ENCODE measurements at regions of chr2 and their contacts with region 1.

Region 1: DNA sequence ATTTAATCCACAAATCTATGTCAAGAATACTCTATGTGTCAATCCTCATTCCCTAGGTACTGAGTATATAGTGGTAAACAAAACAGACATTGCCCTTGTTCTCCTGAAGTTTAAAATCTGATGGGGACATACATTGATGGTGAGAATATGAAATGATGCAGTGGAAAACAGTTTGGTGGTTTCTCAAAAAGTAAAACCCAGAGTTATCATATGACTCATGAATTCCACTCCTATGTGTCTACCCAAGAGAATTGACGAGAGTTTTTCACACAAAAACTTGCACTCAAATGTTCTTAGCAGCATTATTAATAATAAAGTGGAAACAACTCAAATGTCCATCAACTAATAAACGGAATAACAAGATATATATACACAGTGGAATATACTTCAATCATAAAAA is 586.7 kb downstream of the CCDC85A start:
- DNase-seq: no peak
- H3K4me3 ChIP-seq: no peak overlapping the region
- CTCF ChIP-seq: no peak

Region 2: DNA sequence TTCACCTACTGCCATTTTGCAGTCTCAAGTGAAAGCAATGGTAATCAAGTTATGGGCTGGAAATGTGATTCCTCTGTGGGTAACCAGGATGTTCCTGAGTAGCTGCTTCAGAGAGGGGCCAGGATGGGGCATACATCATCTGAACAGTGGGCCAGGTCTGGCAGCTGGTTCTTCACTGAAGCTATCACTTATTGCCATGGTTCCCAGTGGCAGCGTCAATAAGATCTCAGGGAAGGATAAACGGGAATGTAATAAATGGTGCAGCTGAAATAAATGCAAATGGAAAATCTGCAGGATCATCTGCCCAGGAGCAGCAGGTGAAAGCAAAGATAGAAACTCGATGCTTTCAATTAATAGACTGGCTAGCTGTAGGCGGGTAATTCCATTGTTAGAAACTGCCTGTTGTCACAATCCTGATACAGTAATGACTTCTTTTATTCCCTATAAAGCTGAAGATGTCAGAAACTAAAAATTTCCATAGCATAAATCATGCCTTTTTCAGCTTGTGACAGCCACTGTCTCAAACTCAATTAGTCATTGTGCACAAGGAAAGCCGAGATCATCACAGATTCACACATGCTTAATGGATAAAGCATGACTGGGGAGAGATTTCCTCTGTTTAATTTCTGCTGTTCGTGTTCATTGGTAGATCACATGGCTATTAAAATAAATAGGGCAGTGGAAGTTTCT is 642.9 kb before region 1 on chr2:
- in situ Hi-C with region 1: no loop called
- DNase-seq: no peak
- H3K4me3 ChIP-seq: no peak overlapping the region
- CTCF ChIP-seq: no peak

Region 3: DNA sequence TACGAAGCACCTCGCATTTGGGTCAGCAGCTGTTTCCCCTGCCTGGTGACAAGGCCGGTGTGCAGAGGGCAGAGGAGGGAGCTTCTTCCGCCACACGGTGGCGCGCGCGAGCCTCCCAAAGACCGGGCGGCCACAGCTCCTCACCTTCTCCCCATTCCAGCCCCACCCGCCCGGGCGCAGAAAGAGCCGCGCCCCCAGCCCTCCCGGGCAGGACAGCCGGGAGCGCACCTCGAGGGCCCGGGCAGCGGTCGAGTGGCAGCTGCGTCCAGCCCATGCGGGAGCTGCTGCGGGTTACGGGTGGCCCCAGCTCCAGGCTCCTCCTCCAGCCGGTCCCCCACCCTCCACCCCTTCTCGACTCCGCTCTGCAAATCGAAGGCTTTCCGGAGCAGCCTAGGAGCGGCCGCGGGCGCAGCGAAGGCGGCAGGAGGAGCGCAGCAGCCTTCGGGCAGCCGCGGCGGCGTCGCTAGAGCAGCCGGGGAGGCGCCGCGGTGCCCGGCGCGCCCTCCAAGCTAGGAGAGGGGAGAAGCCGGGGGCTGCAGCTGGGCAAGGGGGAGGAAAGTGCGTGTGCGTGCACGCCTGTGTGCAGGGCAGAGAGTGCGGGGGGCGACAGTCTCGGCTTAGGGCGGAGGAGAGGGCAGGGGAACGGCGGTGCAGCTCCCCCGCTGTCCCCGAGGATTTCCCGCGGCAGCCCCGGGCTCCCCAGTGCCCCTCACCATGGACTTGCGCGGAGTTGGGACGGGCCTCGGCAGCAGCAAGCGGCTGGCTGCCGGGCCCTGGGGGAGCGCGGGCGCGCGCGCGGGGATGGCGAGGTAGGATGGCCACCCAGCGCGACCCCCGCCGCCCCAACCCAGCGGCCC is 586.6 kb before region 1 on chr2 and contains the start of gene CCDC85A:
- in situ Hi-C with region 1: loop called (anchors 25 kb)
- DNase-seq: peak; percentile 54
- H3K4me3 ChIP-seq: peak within 1 kb of the TSS; percentile 54
- CTCF ChIP-seq: peak; percentile 71

Region 4: DNA sequence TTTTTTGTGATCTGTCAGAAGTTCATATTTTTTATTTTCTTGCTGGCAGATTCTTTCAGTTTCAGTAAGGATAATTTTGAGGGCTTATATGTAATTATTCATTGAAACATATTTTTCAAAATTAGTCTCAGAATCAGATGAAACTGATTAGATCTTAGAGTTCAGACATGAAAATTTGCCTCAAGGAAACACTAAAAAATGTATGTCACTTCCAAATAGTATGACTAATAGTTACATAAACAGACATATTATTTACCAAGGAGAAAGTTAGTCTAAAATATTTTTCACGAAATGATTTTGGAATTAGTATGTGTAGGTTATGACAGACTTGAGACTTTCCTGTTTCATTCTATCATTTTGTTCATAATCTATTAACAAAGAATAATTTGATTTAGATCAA is 41.9 kb after region 1 on chr2:
- in situ Hi-C with region 1: no loop called
- DNase-seq: no peak
- H3K4me3 ChIP-seq: no peak overlapping the region
- CTCF ChIP-seq: no peak

Measured in astrocyte of the cerebellum (primary cell).